ENCODE measurements at regions of chr5 and their contacts with region 1.

Region 1: GRCh38 chr5:671459-672328 is 21.5 kb downstream of the TPPP start:
- DNase-seq: peak; percentile 50
- ATAC-seq: peak; percentile 84
- H3K4me3 Mint-ChIP-seq: no peak overlapping the region
- H3K27ac Mint-ChIP-seq: no peak overlapping the region
- H3K4me1 Mint-ChIP-seq: peaks cover 13% of the 10 kb centered on the region
- H3K27me3 Mint-ChIP-seq: peaks cover 8% of the 10 kb centered on the region
- CTCF ChIP-seq: no peak

Region 2: DNA sequence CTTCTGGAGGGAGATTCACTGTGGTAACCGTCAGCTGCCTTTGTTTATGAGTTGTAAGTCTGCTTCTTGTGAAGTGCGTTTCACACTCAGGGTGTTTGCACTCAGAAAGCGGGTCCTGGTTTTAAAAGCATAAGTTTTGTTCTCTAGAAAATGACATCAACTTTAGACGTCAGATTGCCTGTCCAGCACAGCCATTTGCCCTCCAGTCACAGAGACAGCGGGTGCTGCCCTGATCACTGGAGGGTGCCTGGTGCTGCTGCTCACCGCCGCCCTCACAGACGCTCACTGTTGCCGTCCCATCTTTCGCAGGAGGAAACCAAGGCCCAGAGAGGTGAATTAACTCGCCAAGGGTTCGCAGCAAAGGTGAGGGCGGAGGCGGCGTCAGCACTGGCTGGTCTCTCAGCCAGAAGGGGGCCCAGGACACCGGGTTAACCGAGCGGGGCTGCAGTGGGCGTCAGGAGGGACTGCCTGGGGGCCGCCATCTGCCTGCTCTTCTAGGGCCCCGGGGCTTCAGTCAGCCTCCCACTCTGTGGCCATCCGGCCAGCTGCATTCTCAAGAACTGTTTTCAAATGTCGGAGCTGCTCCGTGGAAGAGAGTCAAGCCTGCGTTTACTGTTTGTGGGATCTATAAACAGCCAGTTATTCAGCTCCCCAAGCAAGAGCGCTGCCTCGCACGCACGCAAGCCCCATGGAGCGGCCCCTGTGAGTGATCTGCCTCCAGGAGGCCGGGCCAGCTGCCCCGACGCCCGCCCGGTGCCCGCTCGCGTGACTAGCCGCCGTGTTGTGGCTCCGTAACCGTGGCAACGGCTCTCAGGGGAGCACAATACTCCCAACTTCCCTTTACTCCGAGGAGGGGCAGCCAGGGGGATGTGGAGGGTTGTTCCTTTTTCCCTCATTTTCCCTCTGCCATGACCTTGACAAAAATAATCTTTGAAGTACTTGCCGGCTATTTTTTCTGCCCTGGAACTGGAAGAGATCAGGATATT is 272.1 kb before region 1 on chr5:
- CTCF ChIA-PET with region 1: no interaction called
- POLR2A ChIA-PET with region 1: no interaction called
- intact Hi-C with region 1: no loop called
- DNase-seq: peak; percentile 81
- ATAC-seq: peak; percentile 76
- H3K4me3 Mint-ChIP-seq: peak overlapping the region; percentile 69
- H3K27ac Mint-ChIP-seq: peak overlapping the region; percentile 91
- H3K4me1 Mint-ChIP-seq: peaks cover 49% of the 10 kb centered on the region
- H3K27me3 Mint-ChIP-seq: peaks cover 11% of the 10 kb centered on the region
- CTCF ChIP-seq: no peak

Region 3: DNA sequence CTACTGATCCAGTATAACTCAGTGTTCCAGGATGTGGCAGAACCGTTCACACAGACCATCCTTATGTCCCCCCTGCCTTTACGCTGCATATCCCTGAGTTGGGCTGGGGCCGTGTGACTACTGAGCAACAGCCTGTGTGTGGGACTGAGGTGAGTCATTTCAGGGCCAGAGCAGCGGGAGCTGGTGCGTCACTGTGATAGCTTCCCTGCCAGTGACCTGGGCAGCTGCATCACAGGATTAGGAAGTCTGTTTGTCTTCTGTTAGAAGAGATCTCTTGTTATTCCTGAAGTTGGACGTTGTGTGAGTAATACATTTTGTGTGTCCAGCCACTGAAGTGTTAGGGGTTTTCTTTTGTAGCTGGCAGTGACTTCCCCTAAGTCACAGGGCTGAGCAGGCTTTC is 14.1 kb before region 1 on chr5:
- CTCF ChIA-PET with region 1: no interaction called
- POLR2A ChIA-PET with region 1: no interaction called
- intact Hi-C with region 1: no loop called
- DNase-seq: no peak
- ATAC-seq: no peak
- H3K4me3 Mint-ChIP-seq: no peak overlapping the region
- H3K27ac Mint-ChIP-seq: no peak overlapping the region
- H3K4me1 Mint-ChIP-seq: no peaks in the 10 kb centered on the region
- H3K27me3 Mint-ChIP-seq: no peaks in the 10 kb centered on the region
- CTCF ChIP-seq: no peak

Region 4: DNA sequence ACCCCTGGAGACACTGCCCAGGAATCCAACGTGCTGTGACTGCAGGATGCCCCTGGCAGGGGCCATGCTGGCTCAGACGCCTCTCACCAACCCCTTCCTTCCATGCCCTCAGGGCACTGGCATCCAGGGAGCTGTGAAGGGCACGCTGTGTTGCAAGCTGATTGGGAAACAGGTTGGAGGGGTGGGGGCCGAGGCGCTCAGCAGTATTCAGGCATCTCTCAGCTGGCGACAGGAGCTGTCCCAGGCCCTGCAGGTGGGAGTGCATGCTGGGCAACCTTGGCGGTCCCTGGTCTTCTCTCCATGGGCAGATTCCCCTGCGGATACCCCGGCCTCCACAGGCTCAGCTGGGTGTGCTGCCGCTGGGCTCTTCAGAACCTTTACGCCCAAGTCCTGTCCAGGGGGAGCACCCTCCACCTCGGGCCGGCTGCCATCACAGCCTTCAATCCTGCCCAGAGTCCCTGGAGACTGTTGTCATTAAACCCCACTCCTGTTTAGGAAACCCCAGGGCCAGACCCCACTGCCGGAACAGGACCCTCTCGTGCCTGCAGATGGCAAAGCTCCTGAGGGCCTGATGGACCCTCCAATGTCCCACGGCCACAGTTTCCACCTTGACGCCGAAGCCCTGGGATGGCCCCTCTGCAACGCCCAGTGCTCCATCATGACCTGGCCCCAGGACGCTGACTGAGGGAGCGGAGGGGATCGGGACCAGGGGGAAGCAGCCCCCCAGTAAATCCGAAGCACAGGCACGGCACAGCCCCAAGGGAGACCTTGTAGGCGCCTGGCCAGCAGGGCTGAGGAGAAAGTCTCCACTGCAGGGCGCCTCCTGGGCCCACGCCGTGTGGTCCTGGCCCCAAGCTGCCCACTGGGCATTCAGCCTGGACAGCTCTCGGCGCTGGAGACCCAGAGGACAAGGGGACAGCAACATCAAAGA is 12.1 kb after region 1 on chr5:
- CTCF ChIA-PET with region 1: no interaction called
- POLR2A ChIA-PET with region 1: no interaction called
- intact Hi-C with region 1: no loop called
- DNase-seq: no peak
- ATAC-seq: no peak
- H3K4me3 Mint-ChIP-seq: no peak overlapping the region
- H3K27ac Mint-ChIP-seq: no peak overlapping the region
- H3K4me1 Mint-ChIP-seq: no peaks in the 10 kb centered on the region
- H3K27me3 Mint-ChIP-seq: peaks cover 5% of the 10 kb centered on the region
- CTCF ChIP-seq: no peak

Region 5: DNA sequence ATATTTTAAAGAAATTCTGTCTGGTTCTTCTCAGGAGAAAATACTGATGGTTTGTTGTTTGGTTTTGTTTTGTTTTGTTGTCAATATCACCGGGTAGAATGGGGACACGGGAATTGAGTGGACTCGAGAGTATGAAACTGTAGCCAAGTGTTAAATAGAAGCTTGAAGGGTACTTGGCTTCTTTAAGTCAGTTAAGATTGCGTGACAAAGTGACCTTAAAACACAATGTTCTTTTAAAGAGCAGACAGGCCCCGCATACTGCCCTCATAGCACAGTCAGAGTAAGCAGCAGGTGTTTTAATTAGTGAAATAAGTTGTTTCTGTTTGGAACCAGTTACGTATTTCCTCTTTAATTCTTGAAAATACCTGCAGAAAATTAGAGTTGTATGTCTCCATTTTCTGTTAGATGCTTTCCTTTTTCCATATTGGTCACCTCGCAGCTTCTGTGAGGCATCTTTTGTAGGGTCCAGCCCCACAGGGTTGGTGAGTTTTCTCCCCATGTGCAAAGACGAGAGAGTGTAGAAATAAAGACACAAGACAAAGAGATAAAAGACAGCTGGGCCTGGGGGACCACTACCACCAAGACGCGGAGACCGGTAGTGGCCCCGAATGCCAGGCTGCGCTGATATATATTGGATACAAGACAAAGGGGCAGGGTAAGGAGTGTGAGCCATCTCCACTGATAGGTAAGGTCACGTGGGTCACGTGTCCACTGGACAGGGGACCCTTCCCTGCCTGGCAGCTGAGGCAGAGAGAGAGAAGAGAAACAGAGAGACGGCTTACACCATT is 230.6 kb after region 1 on chr5:
- CTCF ChIA-PET with region 1: interaction called, 20 read pairs
- POLR2A ChIA-PET with region 1: no interaction called
- intact Hi-C with region 1: loop called (anchors 1 kb)
- DNase-seq: no peak
- ATAC-seq: no peak
- H3K4me3 Mint-ChIP-seq: no peak overlapping the region
- H3K27ac Mint-ChIP-seq: no peak overlapping the region
- H3K4me1 Mint-ChIP-seq: no peaks in the 10 kb centered on the region
- H3K27me3 Mint-ChIP-seq: no peaks in the 10 kb centered on the region
- CTCF ChIP-seq: no peak

Region 6: GRCh38 chr5:911601-912000 is 239.9 kb after region 1 on chr5:
- CTCF ChIA-PET with region 1: no interaction called
- POLR2A ChIA-PET with region 1: no interaction called
- intact Hi-C with region 1: loop called (anchors 1 kb)
- DNase-seq: no peak
- ATAC-seq: no peak
- H3K4me3 Mint-ChIP-seq: no peak overlapping the region
- H3K27ac Mint-ChIP-seq: no peak overlapping the region
- H3K4me1 Mint-ChIP-seq: no peaks in the 10 kb centered on the region
- H3K27me3 Mint-ChIP-seq: no peaks in the 10 kb centered on the region
- CTCF ChIP-seq: no peak

Region 7: GRCh38 chr5:1217596-1218206 is 546.0 kb after region 1 on chr5:
- CTCF ChIA-PET with region 1: no interaction called
- POLR2A ChIA-PET with region 1: no interaction called
- intact Hi-C with region 1: no loop called
- DNase-seq: no peak
- ATAC-seq: no peak
- H3K4me3 Mint-ChIP-seq: no peak overlapping the region
- H3K27ac Mint-ChIP-seq: no peak overlapping the region
- H3K4me1 Mint-ChIP-seq: no peaks in the 10 kb centered on the region
- H3K27me3 Mint-ChIP-seq: peaks cover 13% of the 10 kb centered on the region
- CTCF ChIP-seq: no peak